Colonic mucosa (tissue), 4 donors: ENCODE measurements at regions of chr13 and their contacts with region 1.

Region 1: DNA sequence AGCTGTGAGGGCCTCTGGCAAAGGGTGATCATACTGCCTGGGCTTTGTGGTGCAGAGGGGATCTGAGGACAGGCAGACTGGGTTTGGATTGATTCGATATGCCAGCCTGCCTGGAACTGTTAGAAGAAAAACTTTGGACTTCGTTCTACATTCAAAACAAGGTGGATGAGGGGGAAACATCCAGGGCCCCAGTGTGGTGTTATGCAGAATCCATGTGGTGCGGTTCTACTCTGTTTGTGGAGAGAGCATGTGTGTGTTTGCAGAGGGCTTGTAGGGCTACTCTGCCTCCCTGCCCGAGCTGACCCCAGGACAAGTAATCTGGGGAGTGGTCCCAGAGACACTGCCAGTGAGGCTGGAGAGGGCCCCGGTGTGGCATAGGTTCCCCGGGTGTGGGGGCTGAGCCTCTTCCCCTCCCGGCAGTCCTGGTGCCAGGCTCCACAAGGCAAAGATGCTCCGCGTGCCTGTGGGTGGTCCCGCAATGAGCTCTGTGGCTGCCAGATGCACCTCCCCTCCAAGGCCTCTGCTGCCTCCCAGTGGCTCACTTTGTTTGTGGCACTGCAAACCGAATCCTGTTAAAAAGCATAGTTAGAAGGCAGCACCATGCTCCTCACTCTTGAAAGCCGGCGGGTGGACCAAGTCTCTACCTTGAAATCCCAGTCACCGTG is 22.3 kb upstream of the TFDP1 start:
- DNase-seq: peak; percentile 61
- H3K4me3 ChIP-seq: no peak overlapping the region
- H3K27ac ChIP-seq: no peak overlapping the region
- H3K4me1 ChIP-seq: no peaks in the 10 kb centered on the region
- H3K27me3 ChIP-seq: no peaks in the 10 kb centered on the region
- CTCF ChIP-seq: no peak

Region 2: DNA sequence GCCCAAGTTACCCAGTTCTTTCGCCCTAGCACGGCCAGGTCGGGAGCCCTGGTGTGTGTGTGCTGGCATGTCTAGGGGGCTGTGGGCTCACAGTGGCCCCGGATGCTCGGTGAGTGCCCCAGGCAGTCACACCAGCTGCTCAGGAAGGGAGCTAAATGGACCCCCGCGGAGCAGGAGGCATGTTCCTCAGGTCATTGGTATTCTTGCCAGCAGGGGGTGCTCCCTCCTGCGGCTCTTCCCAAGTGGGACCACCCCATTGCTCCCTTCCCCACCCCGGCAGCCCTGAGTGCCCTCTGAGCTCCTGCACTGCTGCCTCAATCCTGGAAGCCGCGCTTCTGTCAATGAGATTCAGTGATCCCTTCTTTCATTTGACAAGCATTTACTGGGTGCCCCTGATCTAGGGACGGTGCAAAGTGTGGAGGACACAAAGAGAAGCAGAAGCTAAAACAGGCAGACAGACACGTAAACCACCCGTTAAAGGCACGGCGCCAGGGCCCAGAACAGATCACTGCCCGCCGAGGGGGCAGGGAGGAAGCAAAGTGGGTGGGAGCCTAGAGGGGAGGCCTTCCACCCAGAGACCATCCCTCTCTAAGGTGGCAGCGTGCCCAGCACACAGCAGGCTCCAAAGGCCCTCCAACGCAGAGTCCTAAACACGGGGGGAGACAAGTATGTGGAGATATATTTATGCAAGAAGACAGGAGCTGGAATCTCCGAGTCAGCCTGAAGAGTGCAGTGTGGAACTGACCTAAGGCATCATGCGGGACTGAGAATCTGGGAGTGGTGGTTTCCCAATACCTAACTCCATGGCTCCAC is 103.8 kb before region 1 on chr13:
- intact Hi-C with region 1: loop called (anchors 5 kb)
- DNase-seq: no peak
- H3K4me3 ChIP-seq: no peak overlapping the region
- H3K27ac ChIP-seq: no peak overlapping the region
- H3K4me1 ChIP-seq: no peaks in the 10 kb centered on the region
- H3K27me3 ChIP-seq: no peaks in the 10 kb centered on the region
- CTCF ChIP-seq: no peak

Region 3: DNA sequence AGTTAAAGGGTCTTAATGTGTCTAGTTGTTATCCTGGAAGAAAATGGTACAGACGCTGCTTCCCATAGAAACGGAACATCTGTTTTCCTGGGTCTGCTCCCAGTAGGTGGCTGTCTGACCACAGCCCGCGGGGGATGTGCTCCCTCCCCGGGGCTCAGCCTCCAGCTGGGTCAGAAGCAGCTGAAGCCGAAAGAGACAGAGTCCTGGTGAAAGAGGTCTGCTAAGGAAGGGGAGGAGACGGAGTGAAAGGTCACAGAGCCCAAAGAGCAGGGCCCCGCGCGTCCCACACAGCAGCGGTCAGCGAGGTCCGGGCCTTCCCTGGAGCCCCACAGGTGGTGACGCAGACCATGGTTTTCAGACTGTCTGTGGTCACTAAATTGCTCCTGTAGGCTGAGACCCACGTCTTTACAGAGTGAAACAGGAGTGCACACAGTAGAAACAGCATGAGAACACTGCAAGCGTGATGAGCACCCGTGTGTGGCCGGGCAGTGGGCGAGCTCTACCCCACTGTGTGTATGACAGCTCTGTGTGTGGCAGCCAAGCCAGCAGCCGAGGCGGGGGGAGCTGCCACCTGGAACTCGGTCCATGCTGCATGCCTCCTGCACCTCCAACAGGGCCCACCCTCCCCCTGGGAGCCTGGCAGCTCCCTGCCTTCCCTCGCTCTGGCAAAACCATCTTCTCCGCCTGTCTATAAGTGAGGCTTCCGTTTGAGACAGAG is 463.7 kb after region 1 on chr13:
- intact Hi-C with region 1: no loop called
- DNase-seq: no peak
- H3K4me3 ChIP-seq: no peak overlapping the region
- H3K27ac ChIP-seq: peak overlapping the region; percentile 1
- H3K4me1 ChIP-seq: no peaks in the 10 kb centered on the region
- H3K27me3 ChIP-seq: no peaks in the 10 kb centered on the region
- CTCF ChIP-seq: no peak